K562 (cell line): ENCODE measurements at regions of chr9 and their contacts with region 1.

Region 1: DNA sequence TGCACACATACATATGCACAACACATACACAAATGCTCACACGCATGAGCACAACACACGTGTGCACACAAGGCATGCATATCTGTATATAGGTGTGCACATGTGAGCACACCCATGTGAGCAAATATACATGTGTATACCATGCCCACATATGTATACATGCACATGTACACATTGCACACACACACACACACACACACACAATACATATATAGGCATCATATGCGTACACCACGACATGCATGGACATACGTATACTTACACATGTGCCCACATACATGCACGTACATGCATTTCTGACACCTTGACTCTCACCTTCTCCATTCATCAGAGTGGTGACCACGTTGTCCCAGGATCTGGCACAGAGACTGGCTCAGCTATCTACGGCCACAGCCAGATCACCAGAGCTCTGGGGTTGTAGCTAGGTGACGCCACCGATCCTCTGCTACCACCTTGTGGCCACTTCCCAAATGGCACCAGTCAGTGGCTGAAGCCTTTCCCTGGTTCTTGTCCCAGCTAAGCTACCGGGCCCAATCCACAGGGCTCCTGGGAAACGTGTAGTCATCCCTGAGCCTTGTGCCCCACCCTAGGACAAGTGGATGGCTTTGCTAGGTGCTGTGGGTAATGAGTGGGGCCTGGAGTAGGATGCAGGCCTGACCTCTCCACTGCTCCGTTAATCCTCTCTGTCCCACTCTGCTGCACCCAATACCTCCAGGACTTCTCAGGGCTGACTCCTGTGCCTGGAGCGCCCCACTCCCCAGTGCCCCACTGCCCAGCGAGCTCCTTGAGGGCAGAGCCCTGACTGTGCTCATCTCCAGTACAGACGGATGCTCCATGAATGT is 194.4 kb downstream of the RGS3 start:
- DNase-seq: peak; percentile 82 to 89 (median 85)
- ATAC-seq: peak; percentile 96
- H3K4me3 ChIP-seq: no peak overlapping the region
- H3K27ac ChIP-seq: no peak overlapping the region; the same call in 2 of the 3 replicates
- H3K4me1 ChIP-seq: peaks cover 0 to 6% of the 10 kb centered on the region in 2 experiments; a peak in 2 of 5 replicates
- H3K27me3 ChIP-seq: peaks cover 12 to 34% of the 10 kb centered on the region in 2 experiments
- CTCF ChIP-seq: peak; percentile 92 to 96 (median 94)
- EP300 ChIP-seq: no peak
- POLR2A ChIP-seq: no peak
- RAD21 ChIP-seq: peak; percentile 94 to 95

Region 2: GRCh38 chr9:113275157-113276131 is 382.5 kb before region 1 on chr9 and contains the starts of genes CDC26 and PRPF4:
- CTCF ChIA-PET with region 1: interaction called, 5 read pairs
- POLR2A ChIA-PET with region 1: interaction called, 4 read pairs
- in situ Hi-C with region 1: loop called (anchors 5 kb)
- intact Hi-C with region 1: loop called (anchors 2 kb)
- DNase-seq: peak; percentile 94 to 98 (median 94)
- ATAC-seq: peak; percentile 97
- H3K4me3 ChIP-seq: peak within 1 kb of the TSS; percentile 80
- H3K27ac ChIP-seq: peak within 1 kb of the TSS; percentile 92
- H3K4me1 ChIP-seq: peaks cover 3 to 6% of the 10 kb centered on the region in 2 experiments; a peak in 3 of 5 replicates
- H3K27me3 ChIP-seq: no peaks in the 10 kb centered on the region
- CTCF ChIP-seq: 0 out of 6 replicates have a peak, but pooled peaks of 1 of the 3 experiments have one; percentile 0
- EP300 ChIP-seq: 0 out of 2 replicates have a peak, but pooled peaks have one; percentile 2
- POLR2A ChIP-seq: peak; percentile 99
- RAD21 ChIP-seq: no peak
- polyA plus RNA-seq, gene CDC26: 132 to 147 TPM
- polyA plus RNA-seq, gene PRPF4: 25.8 to 66.0 TPM

Region 3: GRCh38 chr9:113355040-113355596 is 302.8 kb before region 1 on chr9:
- CTCF ChIA-PET with region 1: no interaction called
- POLR2A ChIA-PET with region 1: no interaction called
- in situ Hi-C with region 1: no loop called
- intact Hi-C with region 1: loop called (anchors 5 kb)
- DNase-seq: peak in 2 of 4 experiments; percentile 61 to 68
- ATAC-seq: peak; percentile 89
- H3K4me3 ChIP-seq: no peak overlapping the region
- H3K27ac ChIP-seq: no peak overlapping the region
- H3K4me1 ChIP-seq: peaks cover 0 to 2% of the 10 kb centered on the region in 2 experiments; a peak in 2 of 5 replicates
- H3K27me3 ChIP-seq: peaks cover 2 to 13% of the 10 kb centered on the region in 2 experiments; a peak in 2 of 5 replicates
- CTCF ChIP-seq: peak; percentile 68 to 79 (median 73)
- EP300 ChIP-seq: no peak
- POLR2A ChIP-seq: no peak
- RAD21 ChIP-seq: peak; percentile 71 to 88

Region 4: GRCh38 chr9:113484258-113484730 is 173.6 kb before region 1 on chr9:
- CTCF ChIA-PET with region 1: no interaction called
- POLR2A ChIA-PET with region 1: no interaction called
- in situ Hi-C with region 1: no loop called
- intact Hi-C with region 1: no loop called
- DNase-seq: no peak
- ATAC-seq: no peak
- H3K4me3 ChIP-seq: no peak overlapping the region
- H3K27ac ChIP-seq: no peak overlapping the region
- H3K4me1 ChIP-seq: no peaks in the 10 kb centered on the region
- H3K27me3 ChIP-seq: peaks cover 31 to 62% of the 10 kb centered on the region in 2 experiments
- CTCF ChIP-seq: no peak
- EP300 ChIP-seq: no peak
- POLR2A ChIP-seq: no peak
- RAD21 ChIP-seq: no peak

Region 5: GRCh38 chr9:113591001-113591898 is 66.7 kb before region 1 on chr9:
- CTCF ChIA-PET with region 1: interaction called, 91 read pairs
- POLR2A ChIA-PET with region 1: interaction called, 5 read pairs
- in situ Hi-C with region 1: no loop called
- intact Hi-C with region 1: loop called (anchors 1 kb)
- DNase-seq: peak; percentile 75 to 83 (median 79)
- ATAC-seq: peak; percentile 87
- H3K4me3 ChIP-seq: no peak overlapping the region
- H3K27ac ChIP-seq: no peak overlapping the region
- H3K4me1 ChIP-seq: peaks cover 0 to 9% of the 10 kb centered on the region in 2 experiments; a peak in 3 of 5 replicates
- H3K27me3 ChIP-seq: peaks cover 0 to 4% of the 10 kb centered on the region in 2 experiments; a peak in 2 of 5 replicates
- CTCF ChIP-seq: peak; percentile 91 to 97 (median 96)
- EP300 ChIP-seq: no peak
- POLR2A ChIP-seq: no peak
- RAD21 ChIP-seq: peak; percentile 82 to 94